Activated CD8-positive, alpha-beta T cell treated with anti-CD3 and anti-CD28 coated beads for 36 hours (primary cell): ENCODE measurements at regions of chr12 and their contacts with region 1.

Region 1: GRCh38 chr12:4107436-4107878 is 166.1 kb upstream of the CCND2 start:
- DNase-seq: peak; percentile 88
- ATAC-seq: peak; percentile 92
- H3K4me3 Mint-ChIP-seq: peak overlapping the region; percentile 44
- H3K27ac Mint-ChIP-seq: peak overlapping the region; percentile 90
- H3K4me1 Mint-ChIP-seq: peaks cover 39% of the 10 kb centered on the region
- H3K27me3 Mint-ChIP-seq: peaks cover 2% of the 10 kb centered on the region
- CTCF ChIP-seq: peak; percentile 68

Region 2: GRCh38 chr12:4118017-4118510 is 10.6 kb after region 1 on chr12:
- CTCF ChIA-PET with region 1: interaction called, 41 read pairs
- POLR2A ChIA-PET with region 1: interaction called, 8 read pairs
- intact Hi-C with region 1: no loop called
- DNase-seq: no peak
- ATAC-seq: peak; percentile 5
- H3K4me3 Mint-ChIP-seq: peak overlapping the region; percentile 56
- H3K27ac Mint-ChIP-seq: peak overlapping the region; percentile 90
- H3K4me1 Mint-ChIP-seq: peaks cover 58% of the 10 kb centered on the region
- H3K27me3 Mint-ChIP-seq: no peaks in the 10 kb centered on the region
- CTCF ChIP-seq: no peak

Region 3: GRCh38 chr12:4156317-4156716 is 48.9 kb after region 1 on chr12:
- CTCF ChIA-PET with region 1: interaction called, 15 read pairs
- POLR2A ChIA-PET with region 1: interaction called, 8 read pairs
- intact Hi-C with region 1: no loop called
- DNase-seq: no peak
- ATAC-seq: no peak
- H3K4me3 Mint-ChIP-seq: no peak overlapping the region
- H3K27ac Mint-ChIP-seq: peak overlapping the region; percentile 56
- H3K4me1 Mint-ChIP-seq: peaks cover 85% of the 10 kb centered on the region
- H3K27me3 Mint-ChIP-seq: no peaks in the 10 kb centered on the region
- CTCF ChIP-seq: no peak

Region 4: DNA sequence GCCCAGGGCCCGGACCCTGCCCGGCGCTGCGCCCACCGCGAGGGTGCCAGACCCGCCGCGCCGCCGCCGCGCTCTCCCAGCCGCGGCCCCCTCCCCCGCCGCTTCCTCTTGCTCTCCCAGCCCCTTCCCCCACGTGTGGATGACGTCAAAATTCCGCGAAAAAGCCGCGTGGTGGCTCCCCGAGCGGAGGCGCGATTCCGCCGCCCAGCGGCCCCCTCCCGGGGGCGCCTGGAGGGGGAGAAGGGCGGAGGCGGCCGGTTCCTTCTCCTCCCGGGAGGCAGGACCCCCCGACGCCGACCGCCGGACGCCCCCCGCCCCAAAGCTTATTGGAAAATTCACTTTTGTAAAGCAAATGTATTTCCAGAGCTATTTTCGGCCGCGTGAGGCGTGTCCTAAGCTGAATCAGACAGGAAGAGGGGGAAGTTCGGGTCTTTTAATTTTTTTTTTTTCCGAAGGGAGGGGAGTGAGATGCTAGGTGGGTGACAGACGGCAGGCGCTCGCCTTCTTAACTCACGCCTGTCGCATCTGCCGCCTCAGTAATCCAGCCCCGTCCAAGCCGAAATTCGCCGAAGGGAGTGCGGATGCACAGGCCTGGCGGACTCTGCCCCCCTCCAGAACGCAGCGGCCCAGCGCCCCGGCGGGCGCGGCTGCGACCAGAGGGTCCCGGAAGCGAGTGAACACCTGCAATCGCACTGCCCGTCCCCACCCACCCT is 162.0 kb after region 1 on chr12:
- CTCF ChIA-PET with region 1: interaction called, 50 read pairs
- POLR2A ChIA-PET with region 1: interaction called, 26 read pairs
- intact Hi-C with region 1: loop called (anchors 2 kb)
- DNase-seq: peak; percentile 96
- ATAC-seq: peak; percentile 22
- H3K4me3 Mint-ChIP-seq: peak overlapping the region; percentile 100
- H3K27ac Mint-ChIP-seq: peak overlapping the region; percentile 99
- H3K4me1 Mint-ChIP-seq: peaks cover 19% of the 10 kb centered on the region
- H3K27me3 Mint-ChIP-seq: no peaks in the 10 kb centered on the region
- CTCF ChIP-seq: peak; percentile 32